Right ventricle myocardium superior (tissue), 1 donor: ENCODE measurements at regions of chr1 and their contacts with region 1.

Region 1: GRCh38 chr1:211654838-211655787 is 20.3 kb downstream of the NEK2 start:
- DNase-seq: peak; percentile 94
- ATAC-seq: peak; percentile 98

Region 2: GRCh38 chr1:211469938-211470529 is 185.1 kb before region 1 on chr1:
- intact Hi-C with region 1: loop called (anchors 5 kb)
- DNase-seq: peak; percentile 88
- ATAC-seq: peak; percentile 93

Region 3: GRCh38 chr1:211515090-211516023 is 139.8 kb before region 1 on chr1:
- intact Hi-C with region 1: loop called (anchors 5 kb)
- DNase-seq: peak; percentile 89
- ATAC-seq: peak; percentile 92

Region 4: DNA sequence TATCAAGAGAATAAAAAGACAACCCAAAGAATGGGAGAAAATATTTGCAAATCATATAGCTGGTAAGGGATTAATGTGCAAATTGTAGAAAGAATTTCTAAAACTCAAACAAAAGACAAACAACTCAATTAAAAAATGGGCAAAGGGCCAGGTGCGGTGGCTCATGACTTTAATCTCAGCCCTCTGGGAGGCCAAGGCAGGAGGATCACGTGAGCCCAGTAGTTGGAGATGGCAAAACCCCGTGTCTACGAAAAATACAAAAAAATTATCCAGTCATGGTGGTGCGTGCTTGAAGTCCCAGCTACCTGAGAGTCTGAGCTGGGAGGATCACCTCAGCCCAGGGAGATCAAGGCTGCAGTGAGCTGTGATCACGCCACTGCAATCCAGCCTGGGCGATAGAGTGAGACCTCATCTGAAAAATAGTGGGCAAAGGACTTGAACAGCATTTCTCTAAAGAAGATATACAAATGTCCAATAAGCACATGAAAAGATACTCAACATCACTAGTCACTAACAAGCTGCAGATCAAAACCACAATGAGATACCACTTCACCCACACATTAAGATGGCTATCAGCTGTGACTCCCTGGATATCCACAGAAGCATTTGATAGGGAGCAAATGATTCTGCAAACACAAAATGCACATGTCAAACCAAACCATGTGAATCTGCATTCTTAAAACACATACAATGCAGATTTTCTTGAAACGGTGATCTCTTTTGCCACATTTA is 97.1 kb before region 1 on chr1:
- intact Hi-C with region 1: no loop called
- DNase-seq: no peak
- ATAC-seq: no peak